A549 (cell line): ENCODE measurements at regions of chr2 and their contacts with region 1.

Region 1: GRCh38 chr2:16496426-16497388 is 168.9 kb downstream of the CYRIA start:
- DNase-seq: no peak
- ATAC-seq: no peak
- H3K4me3 ChIP-seq: no peak overlapping the region
- H3K27ac ChIP-seq: no peak overlapping the region
- H3K4me1 ChIP-seq: no peaks in the 10 kb centered on the region
- CTCF ChIP-seq: no peak
- EP300 ChIP-seq: no peak
- POLR2A ChIP-seq: no peak
- RAD21 ChIP-seq: no peak

Region 2: GRCh38 chr2:16507655-16508489 is 11.2 kb after region 1 on chr2:
- CTCF ChIA-PET with region 1: interaction called, 30 read pairs
- POLR2A ChIA-PET with region 1: no interaction called
- DNase-seq: peak; percentile 46 to 57
- ATAC-seq: peak; percentile 96 to 99
- H3K4me3 ChIP-seq: peak overlapping the region; percentile 56
- H3K27ac ChIP-seq: peak overlapping the region in 1 of 2 experiments; percentile 54; a peak in 2 of 6 replicates
- H3K4me1 ChIP-seq: peaks cover 5% of the 10 kb centered on the region; the same call in 1 of the 3 replicates
- CTCF ChIP-seq: peak; percentile 85
- EP300 ChIP-seq: no peak
- POLR2A ChIP-seq: no peak
- RAD21 ChIP-seq: peak; percentile 81 to 97